Cardiac septum (tissue), 1 donor: ENCODE measurements at regions of chr10 and their contacts with region 1.

Region 1: DNA sequence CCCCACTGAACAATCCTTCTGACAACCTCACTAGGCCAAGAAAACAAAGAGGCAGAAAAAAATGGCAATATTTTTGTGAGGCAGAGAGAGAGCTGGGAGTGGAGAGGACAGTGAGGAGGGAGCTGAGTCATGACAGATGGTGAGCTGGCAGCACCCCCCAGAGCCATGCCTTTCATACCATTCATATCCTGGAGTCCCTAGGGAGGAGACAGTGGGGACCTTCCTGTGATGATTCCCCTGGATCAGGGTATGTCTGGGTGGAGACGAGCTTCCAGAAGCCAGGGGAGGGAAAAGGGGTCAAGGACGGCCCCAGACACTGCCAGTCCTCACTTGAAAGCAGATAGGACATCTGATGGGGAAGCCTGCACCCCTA is 160.5 kb downstream of the ADAM12 start:
- DNase-seq: no peak

Region 2: GRCh38 chr10:126133906-126134656 is 93.7 kb before region 1 on chr10:
- intact Hi-C with region 1: loop called (anchors 10 kb)
- DNase-seq: no peak